IMR-90 (cell line): ENCODE measurements at regions of chr18 and their contacts with region 1.

Region 1: DNA sequence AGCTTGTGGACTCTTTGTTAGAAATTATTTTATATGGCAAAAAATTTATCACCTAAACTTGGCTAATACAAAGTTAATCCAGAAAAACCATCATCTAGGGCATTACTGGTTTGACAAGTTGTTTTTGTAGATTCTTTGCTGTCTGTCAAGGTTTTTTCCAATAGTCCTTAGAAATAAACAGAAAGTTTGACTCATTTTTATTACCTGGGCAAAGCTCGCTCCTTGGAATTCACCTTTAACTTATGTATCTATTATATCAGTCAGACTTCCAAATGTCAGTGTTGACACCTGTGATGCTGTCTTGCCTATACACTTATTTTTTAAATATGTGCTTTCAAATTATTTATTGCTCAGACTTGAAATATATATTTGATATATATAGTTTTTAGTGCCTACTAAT is 21.7 kb downstream of the LAMA3 start:
- DNase-seq: no peak
- ATAC-seq: no peak
- H3K4me3 ChIP-seq: no peak overlapping the region
- H3K27ac ChIP-seq: no peak overlapping the region
- H3K4me1 ChIP-seq: no peaks in the 10 kb centered on the region
- H3K27me3 ChIP-seq: no peaks in the 10 kb centered on the region
- CTCF ChIP-seq: no peak
- POLR2A ChIP-seq: no peak
- RAD21 ChIP-seq: no peak

Region 2: GRCh38 chr18:23693845-23694244 is 17.1 kb before region 1 on chr18:
- CTCF ChIA-PET with region 1: no interaction called
- POLR2A ChIA-PET with region 1: interaction called, 11 read pairs
- dilution Hi-C with region 1: no loop called
- in situ Hi-C with region 1: no loop called
- intact Hi-C with region 1: no loop called
- DNase-seq: no peak
- ATAC-seq: no peak
- H3K4me3 ChIP-seq: no peak overlapping the region
- H3K27ac ChIP-seq: no peak overlapping the region
- H3K4me1 ChIP-seq: peaks cover 20% of the 10 kb centered on the region
- H3K27me3 ChIP-seq: peaks cover 24% of the 10 kb centered on the region
- CTCF ChIP-seq: no peak
- POLR2A ChIP-seq: no peak
- RAD21 ChIP-seq: no peak